Heart right ventricle (tissue), 16 donors: ENCODE measurements at regions of chr17 and their contacts with region 1.

Region 1: DNA sequence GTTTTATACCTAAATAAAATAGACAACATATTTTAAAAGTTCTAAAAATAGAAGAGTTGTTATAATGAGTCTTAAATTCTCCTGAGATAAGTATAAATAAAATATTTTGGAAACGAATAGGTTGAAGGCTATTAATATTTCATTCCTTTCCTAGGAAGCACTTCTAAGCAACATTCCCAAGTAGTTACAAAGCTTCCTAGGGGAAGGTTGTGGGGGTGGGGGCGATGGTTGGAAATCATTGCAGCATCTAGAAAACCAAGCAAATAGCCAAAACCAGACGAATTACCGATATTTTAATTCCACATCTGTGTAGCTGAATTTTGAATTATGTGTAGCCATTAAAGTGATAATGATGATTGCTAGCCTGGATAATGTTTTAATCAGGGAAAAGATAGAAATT is 26.9 kb downstream of the PTRH2 start:
- DNase-seq: no peak
- ATAC-seq: no peak
- H3K4me3 ChIP-seq: no peak overlapping the region
- H3K27ac ChIP-seq: no peak overlapping the region
- H3K4me1 ChIP-seq: no peaks in the 10 kb centered on the region
- H3K27me3 ChIP-seq: no peaks in the 10 kb centered on the region
- CTCF ChIP-seq: no peak

Region 2: GRCh38 chr17:60073621-60074020 is 393.3 kb after region 1 on chr17:
- intact Hi-C with region 1: loop called in 1 of 10 experiments (anchors 5 kb)
- DNase-seq: no peak
- ATAC-seq: no peak
- H3K4me3 ChIP-seq: no peak overlapping the region
- H3K27ac ChIP-seq: no peak overlapping the region
- H3K4me1 ChIP-seq: peaks cover 0 to 16% (median 14%) of the 10 kb centered on the region in 9 donors
- H3K27me3 ChIP-seq: no peaks in the 10 kb centered on the region
- CTCF ChIP-seq: no peak